Endothelial cell of umbilical vein (primary cell): ENCODE measurements at regions of chr11 and their contacts with region 1.

Region 1: DNA sequence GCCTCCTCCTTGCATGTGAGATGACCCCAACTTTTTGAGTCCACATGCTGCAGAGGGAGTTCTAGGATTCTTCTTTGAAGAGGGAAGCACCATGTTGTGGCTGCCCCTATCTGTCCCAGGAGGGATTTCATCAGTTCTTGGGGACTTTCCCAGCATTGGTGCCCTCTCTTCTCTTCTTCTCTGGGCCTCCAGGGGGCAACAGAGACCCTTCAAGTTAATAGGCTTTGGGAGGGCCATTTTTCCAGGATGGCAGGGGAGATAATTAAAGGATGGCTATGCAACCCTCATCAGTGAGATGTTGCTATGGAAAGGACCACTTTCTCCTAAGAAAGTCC is 3.5 kb downstream of the MMP1 start:
- DNase-seq: peak; percentile 48
- H3K4me3 ChIP-seq: no peak overlapping the region
- H3K27ac ChIP-seq: no peak overlapping the region
- H3K4me1 ChIP-seq: peaks cover 17% of the 10 kb centered on the region
- H3K27me3 ChIP-seq: no peaks in the 10 kb centered on the region
- CTCF ChIP-seq: peak; percentile 60 to 66
- POLR2A ChIP-seq: no peak

Region 2: GRCh38 chr11:102109896-102110760 is 684.3 kb before region 1 on chr11 and contains the start of gene YAP1:
- CTCF ChIA-PET with region 1: no interaction called
- POLR2A ChIA-PET with region 1: no interaction called
- dilution Hi-C with region 1: no loop called
- intact Hi-C with region 1: loop called (anchors 10 kb)
- DNase-seq: peak; percentile 89
- H3K4me3 ChIP-seq: peak within 1 kb of the TSS; percentile 85 to 99 (median 88)
- H3K27ac ChIP-seq: peak within 1 kb of the TSS; percentile 72
- H3K4me1 ChIP-seq: peaks cover 11% of the 10 kb centered on the region
- H3K27me3 ChIP-seq: peaks cover 2 to 18% of the 10 kb centered on the region in 2 experiments
- CTCF ChIP-seq: no peak
- POLR2A ChIP-seq: no peak
- total RNA-seq, gene YAP1: 36.5 and 48.9 TPM in 2 replicates

Region 3: GRCh38 chr11:102780491-102780918 is 13.9 kb before region 1 on chr11 and contains the start of gene MMP10:
- CTCF ChIA-PET with region 1: interaction called, 12 read pairs
- POLR2A ChIA-PET with region 1: no interaction called
- dilution Hi-C with region 1: no loop called
- intact Hi-C with region 1: loop called (anchors 1 kb)
- DNase-seq: peak; percentile 89
- H3K4me3 ChIP-seq: peak within 1 kb of the TSS in 1 of 3 experiments; percentile 15
- H3K27ac ChIP-seq: peak within 1 kb of the TSS; percentile 76
- H3K4me1 ChIP-seq: peaks cover 14% of the 10 kb centered on the region
- H3K27me3 ChIP-seq: no peaks in the 10 kb centered on the region
- CTCF ChIP-seq: peak; percentile 61 to 63
- POLR2A ChIP-seq: no peak
- total RNA-seq, gene MMP10: 15.0 and 22.8 TPM in 2 replicates

Region 4: GRCh38 chr11:102831489-102832440 is 37.4 kb after region 1 on chr11:
- CTCF ChIA-PET with region 1: no interaction called
- POLR2A ChIA-PET with region 1: no interaction called
- dilution Hi-C with region 1: no loop called
- intact Hi-C with region 1: loop called (anchors 2 kb)
- DNase-seq: peak; percentile 63
- H3K4me3 ChIP-seq: peak overlapping the region in 2 of 3 experiments; percentile 15 to 40
- H3K27ac ChIP-seq: no peak overlapping the region
- H3K4me1 ChIP-seq: no peaks in the 10 kb centered on the region
- H3K27me3 ChIP-seq: peaks cover 5 to 13% of the 10 kb centered on the region in 2 experiments
- CTCF ChIP-seq: peak; percentile 62 to 71
- POLR2A ChIP-seq: no peak

Region 5: DNA sequence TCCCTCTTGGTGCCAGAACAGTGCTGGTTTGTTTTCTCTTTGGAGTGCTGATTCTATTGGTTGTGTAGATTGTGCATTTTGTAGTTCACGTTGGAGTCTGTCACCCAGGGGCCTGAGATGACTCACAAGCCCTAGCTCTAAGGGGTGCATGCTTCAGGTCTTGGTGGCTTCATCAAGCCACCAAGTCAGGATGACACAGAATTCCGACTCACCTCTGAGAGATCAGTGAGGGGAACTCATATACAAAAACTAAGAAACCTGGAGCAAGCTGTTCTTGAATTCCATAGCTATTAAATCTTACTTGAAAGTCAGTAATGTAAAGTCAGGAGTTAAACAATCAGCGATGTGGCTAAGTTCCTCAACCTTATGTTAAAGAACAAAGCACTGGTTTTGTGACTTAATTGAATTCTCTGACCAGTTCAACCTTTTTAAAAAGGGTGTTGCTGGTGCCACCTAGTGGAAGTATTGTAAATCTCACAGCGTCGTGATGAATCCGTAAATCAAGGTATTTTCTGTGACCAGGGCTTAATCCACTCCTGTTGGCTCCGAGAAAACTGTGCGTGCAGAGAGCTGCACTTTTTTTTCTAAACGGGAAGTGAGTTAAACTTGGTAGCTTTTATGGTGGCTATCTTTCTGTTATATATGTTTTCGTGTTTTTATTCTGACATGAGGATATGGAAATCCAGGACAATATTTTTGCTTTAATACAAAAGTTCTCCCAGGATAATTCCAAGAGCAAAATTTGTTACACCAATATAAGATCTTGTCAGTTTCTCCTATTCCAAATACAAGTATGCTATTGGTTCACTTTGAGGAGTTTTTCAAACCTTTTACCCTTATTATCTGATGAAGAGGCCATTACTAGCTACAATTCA is 146.5 kb after region 1 on chr11:
- CTCF ChIA-PET with region 1: interaction called, 12 read pairs
- POLR2A ChIA-PET with region 1: no interaction called
- dilution Hi-C with region 1: no loop called
- intact Hi-C with region 1: loop called (anchors 1 kb)
- DNase-seq: peak; percentile 79
- H3K4me3 ChIP-seq: no peak overlapping the region
- H3K27ac ChIP-seq: no peak overlapping the region
- H3K4me1 ChIP-seq: no peaks in the 10 kb centered on the region
- H3K27me3 ChIP-seq: no peaks in the 10 kb centered on the region
- CTCF ChIP-seq: peak; percentile 65 to 67
- POLR2A ChIP-seq: no peak

Region 6: GRCh38 chr11:103055221-103055890 is 260.9 kb after region 1 on chr11:
- CTCF ChIA-PET with region 1: interaction called, 7 read pairs
- POLR2A ChIA-PET with region 1: no interaction called
- dilution Hi-C with region 1: no loop called
- intact Hi-C with region 1: loop called (anchors 2 kb)
- DNase-seq: peak; percentile 54
- H3K4me3 ChIP-seq: no peak overlapping the region
- H3K27ac ChIP-seq: no peak overlapping the region
- H3K4me1 ChIP-seq: no peaks in the 10 kb centered on the region
- H3K27me3 ChIP-seq: no peaks in the 10 kb centered on the region
- CTCF ChIP-seq: peak; percentile 43 to 45
- POLR2A ChIP-seq: no peak